IMR-90 (cell line): ENCODE measurements at regions of chr2 and their contacts with region 1.

Region 1: GRCh38 chr2:150472511-150472899 is 15.0 kb downstream of the RND3 start:
- DNase-seq: peak; percentile 87
- ATAC-seq: peak; percentile 36
- H3K4me3 ChIP-seq: no peak overlapping the region
- H3K27ac ChIP-seq: no peak overlapping the region
- H3K4me1 ChIP-seq: peaks cover 18% of the 10 kb centered on the region
- H3K27me3 ChIP-seq: no peaks in the 10 kb centered on the region
- CTCF ChIP-seq: no peak
- POLR2A ChIP-seq: no peak
- RAD21 ChIP-seq: no peak

Region 2: GRCh38 chr2:149733936-149734685 is 738.4 kb before region 1 on chr2:
- CTCF ChIA-PET with region 1: no interaction called
- POLR2A ChIA-PET with region 1: no interaction called
- dilution Hi-C with region 1: no loop called
- in situ Hi-C with region 1: loop called (anchors 25 kb)
- intact Hi-C with region 1: no loop called
- DNase-seq: peak; percentile 48
- ATAC-seq: peak; percentile 27; the same call in 1 of the 2 replicates
- H3K4me3 ChIP-seq: no peak overlapping the region
- H3K27ac ChIP-seq: peak overlapping the region; percentile 79; the same call in 1 of the 2 replicates
- H3K4me1 ChIP-seq: peaks cover 17% of the 10 kb centered on the region
- H3K27me3 ChIP-seq: no peaks in the 10 kb centered on the region
- CTCF ChIP-seq: no peak
- POLR2A ChIP-seq: no peak
- RAD21 ChIP-seq: no peak

Region 3: GRCh38 chr2:150133623-150134022 is 338.9 kb before region 1 on chr2:
- CTCF ChIA-PET with region 1: no interaction called
- POLR2A ChIA-PET with region 1: no interaction called
- dilution Hi-C with region 1: no loop called
- in situ Hi-C with region 1: loop called (anchors 25 kb)
- intact Hi-C with region 1: loop called (anchors 10 kb)
- DNase-seq: peak; percentile 92
- ATAC-seq: peak; percentile 49
- H3K4me3 ChIP-seq: no peak overlapping the region
- H3K27ac ChIP-seq: no peak overlapping the region
- H3K4me1 ChIP-seq: peaks cover 5% of the 10 kb centered on the region; the same call in 1 of the 2 replicates
- H3K27me3 ChIP-seq: no peaks in the 10 kb centered on the region
- CTCF ChIP-seq: no peak
- POLR2A ChIP-seq: no peak
- RAD21 ChIP-seq: peak; percentile 18; the same call in 1 of the 2 replicates

Region 4: GRCh38 chr2:150520887-150521664 is 48.6 kb after region 1 on chr2:
- CTCF ChIA-PET with region 1: no interaction called
- POLR2A ChIA-PET with region 1: no interaction called
- dilution Hi-C with region 1: no loop called
- in situ Hi-C with region 1: no loop called
- intact Hi-C with region 1: no loop called
- DNase-seq: peak; percentile 83
- ATAC-seq: peak; percentile 78
- H3K4me3 ChIP-seq: no peak overlapping the region
- H3K27ac ChIP-seq: peak overlapping the region; percentile 46
- H3K4me1 ChIP-seq: peaks cover 13% of the 10 kb centered on the region
- H3K27me3 ChIP-seq: no peaks in the 10 kb centered on the region
- CTCF ChIP-seq: no peak
- POLR2A ChIP-seq: no peak
- RAD21 ChIP-seq: no peak